ENCODE measurements at regions of chr19 and their contacts with region 1.

Region 1: GRCh38 chr19:58154679-58155648 is 4.4 kb upstream of the ZNF329 start:
- DNase-seq: peak; percentile 92 to 99 (median 96)
- H3K4me3 ChIP-seq: peak overlapping the region; percentile 88
- H3K4me3 Mint-ChIP-seq: peak overlapping the region; percentile 71 to 89 (median 84)
- H3K27ac ChIP-seq: peak overlapping the region; percentile 80
- H3K27ac Mint-ChIP-seq: peak overlapping the region; percentile 41 to 85 (median 69)
- H3K4me1 ChIP-seq: peaks cover 16% of the 10 kb centered on the region
- H3K4me1 Mint-ChIP-seq: peaks cover 5 to 24% (median 10%) of the 10 kb centered on the region in 4 donors
- H3K27me3 ChIP-seq: no peaks in the 10 kb centered on the region
- H3K27me3 Mint-ChIP-seq: no peaks in the 10 kb centered on the region

Region 2: DNA sequence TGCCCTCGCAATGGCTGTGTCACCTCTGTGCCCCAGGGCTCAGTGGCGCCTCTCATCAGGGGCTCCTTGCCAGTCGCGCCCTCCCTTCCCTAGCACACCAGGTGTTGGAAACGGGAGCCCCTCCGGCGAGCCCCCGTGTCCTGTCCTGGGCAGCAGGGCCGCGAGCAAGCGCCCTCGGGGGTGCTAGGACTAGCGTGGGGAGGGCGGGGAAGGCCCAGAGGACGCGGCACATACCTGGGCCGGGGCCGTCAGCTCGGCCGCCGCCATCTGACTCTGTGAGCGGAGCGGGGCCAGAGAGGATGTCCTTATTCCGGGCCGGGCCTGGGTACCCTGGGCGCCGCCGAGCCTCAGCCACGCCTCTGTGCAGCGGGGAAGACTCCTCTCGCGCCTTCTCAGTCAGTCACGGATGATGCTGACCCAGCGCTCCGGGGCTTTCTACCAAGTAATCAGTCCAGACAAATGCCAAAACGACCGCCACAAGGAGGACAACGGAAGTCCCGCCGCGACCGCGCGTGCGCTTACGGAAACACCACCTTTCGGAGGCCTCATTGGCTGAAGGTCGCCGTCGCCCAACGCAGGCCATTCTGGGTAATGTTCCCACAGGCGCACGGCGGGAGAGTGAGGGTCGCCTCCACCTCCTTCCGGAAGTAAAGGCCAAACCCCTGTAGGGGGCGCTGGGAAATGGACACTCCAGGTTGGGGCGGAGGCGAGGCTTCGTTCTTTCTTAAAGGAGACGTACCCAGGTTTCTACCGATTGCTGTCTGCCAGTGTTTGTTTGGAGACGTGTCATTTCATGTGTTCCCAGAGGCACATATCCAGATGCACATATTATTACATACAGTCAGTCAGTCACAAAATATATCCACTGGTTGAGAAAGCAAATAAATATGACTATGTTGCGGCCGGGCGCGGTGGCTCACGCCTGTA is 207.5 kb before region 1 on chr19 and contains the start of gene ZNF256:
- CTCF ChIA-PET with region 1: no interaction called
- POLR2A ChIA-PET with region 1: no interaction called
- intact Hi-C with region 1: loop called (anchors 1 kb)
- DNase-seq: peak; percentile 79 to 85 (median 82)
- H3K4me3 ChIP-seq: peak within 1 kb of the TSS; percentile 69 to 89
- H3K4me3 Mint-ChIP-seq: peak within 1 kb of the TSS; percentile 90 to 98 (median 95)
- H3K27ac ChIP-seq: peak within 1 kb of the TSS; percentile 66
- H3K27ac Mint-ChIP-seq: peak within 1 kb of the TSS; percentile 78 to 98 (median 92)
- H3K4me1 ChIP-seq: peaks cover 18% of the 10 kb centered on the region
- H3K4me1 Mint-ChIP-seq: peaks cover 15 to 24% (median 20%) of the 10 kb centered on the region in 4 donors
- H3K27me3 ChIP-seq: no peaks in the 10 kb centered on the region
- H3K27me3 Mint-ChIP-seq: no peaks in the 10 kb centered on the region
- total RNA-seq, gene ZNF256: 12.4 to 13.9 TPM

Region 3: DNA sequence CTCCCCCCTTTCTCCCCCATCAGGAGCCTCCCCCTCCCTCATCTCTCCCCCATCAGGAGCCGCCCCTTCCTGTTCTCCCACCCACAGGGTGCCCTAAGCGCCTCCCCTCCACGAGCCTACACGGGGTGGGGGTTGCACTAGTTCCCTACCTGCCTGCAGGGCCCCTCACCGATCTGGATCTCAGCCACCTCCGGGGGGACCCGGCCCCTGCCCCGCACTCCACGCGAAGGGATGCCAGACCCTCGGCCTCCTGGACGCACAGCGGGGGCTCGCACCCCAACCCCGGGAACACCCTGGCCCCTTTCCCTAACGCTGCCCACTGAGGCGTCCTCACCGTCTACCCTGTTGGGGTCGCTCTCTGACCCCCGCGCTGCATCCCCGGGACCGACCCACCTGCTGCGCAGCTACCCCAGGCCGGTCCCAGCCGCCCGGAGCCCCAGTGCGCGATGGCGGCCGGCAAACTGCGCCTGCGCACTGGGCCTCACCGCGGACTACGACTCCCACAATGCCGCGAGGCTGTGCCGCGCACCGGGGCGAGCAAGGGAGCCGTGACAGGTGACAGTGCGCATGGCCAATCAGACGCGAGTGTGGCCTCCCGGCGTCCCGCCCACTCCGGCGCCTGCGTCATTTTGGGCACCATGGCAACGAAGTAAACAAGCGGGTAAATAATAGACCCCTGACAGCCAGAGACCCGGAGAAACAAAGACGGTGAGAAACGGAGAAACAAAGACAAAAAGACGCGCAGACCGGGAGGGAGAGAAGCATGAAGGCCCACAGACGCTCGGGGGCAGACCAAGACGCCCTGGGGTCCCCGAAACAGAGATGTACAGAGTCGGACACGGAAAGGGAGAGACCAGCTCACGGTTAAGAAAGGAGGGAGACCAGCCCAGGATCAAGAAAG is 56.9 kb before region 1 on chr19 and contains the start of gene ZSCAN18:
- CTCF ChIA-PET with region 1: no interaction called
- POLR2A ChIA-PET with region 1: interaction called, 3 read pairs
- intact Hi-C with region 1: loop called (anchors 1 kb)
- DNase-seq: peak; percentile 98 to 99 (median 99)
- H3K4me3 ChIP-seq: peak within 1 kb of the TSS; percentile 61 to 69
- H3K4me3 Mint-ChIP-seq: peak within 1 kb of the TSS; percentile 88 to 97 (median 92)
- H3K27ac ChIP-seq: peak within 1 kb of the TSS; percentile 98
- H3K27ac Mint-ChIP-seq: peak within 1 kb of the TSS; percentile 100
- H3K4me1 ChIP-seq: peaks cover 5% of the 10 kb centered on the region
- H3K4me1 Mint-ChIP-seq: peaks cover 7 to 28% (median 14%) of the 10 kb centered on the region in 4 donors
- H3K27me3 ChIP-seq: no peaks in the 10 kb centered on the region
- H3K27me3 Mint-ChIP-seq: peaks cover 0 to 3% of the 10 kb centered on the region in 2 donors
- total RNA-seq, gene ZSCAN18: 63.2 to 69.1 TPM

Measured in CD4-positive, alpha-beta memory T cell (primary cell).